ENCODE measurements at regions of chr3 and their contacts with region 1.

Region 1: DNA sequence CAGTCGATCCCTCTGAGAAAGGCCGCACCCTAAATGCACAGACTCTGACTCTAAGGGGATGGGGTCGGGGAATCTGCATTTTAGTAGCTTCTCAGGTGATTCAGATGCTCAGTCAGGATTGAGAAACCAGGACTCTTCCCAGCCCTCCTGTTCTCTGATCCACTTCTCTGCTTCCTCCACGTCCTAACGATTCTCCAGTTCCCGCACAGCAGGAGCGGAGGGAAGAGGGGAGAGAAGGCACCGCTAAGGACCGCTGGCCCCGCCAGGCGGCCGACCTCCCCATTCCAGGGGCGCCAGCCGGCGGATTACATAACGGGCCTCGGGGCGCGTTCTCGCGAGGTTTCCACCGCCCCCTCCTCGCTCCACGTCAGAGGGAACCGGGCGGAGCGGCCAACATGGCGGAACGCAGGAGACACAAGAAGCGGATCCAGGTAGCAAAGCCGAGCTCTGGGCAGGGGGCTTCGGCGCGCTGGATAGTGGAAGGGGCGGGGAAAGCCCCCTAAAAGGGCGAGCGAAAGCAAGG is at the start of gene SEC62:
- DNase-seq: peak; percentile 90 to 97 (median 94)
- H3K4me3 ChIP-seq: peak within 1 kb of the TSS; percentile 80
- H3K4me3 Mint-ChIP-seq: peak within 1 kb of the TSS; percentile 86 to 99 (median 96)
- H3K27ac ChIP-seq: peak within 1 kb of the TSS; percentile 89
- H3K27ac Mint-ChIP-seq: peak within 1 kb of the TSS; percentile 97 to 100 (median 99)
- H3K4me1 ChIP-seq: peaks cover 48% of the 10 kb centered on the region
- H3K4me1 Mint-ChIP-seq: peaks cover 56 to 77% (median 63%) of the 10 kb centered on the region in 3 donors
- H3K27me3 ChIP-seq: no peaks in the 10 kb centered on the region
- H3K27me3 Mint-ChIP-seq: no peaks in the 10 kb centered on the region
- total RNA-seq, gene SEC62: 66.7 to 68.3 TPM

Region 2: DNA sequence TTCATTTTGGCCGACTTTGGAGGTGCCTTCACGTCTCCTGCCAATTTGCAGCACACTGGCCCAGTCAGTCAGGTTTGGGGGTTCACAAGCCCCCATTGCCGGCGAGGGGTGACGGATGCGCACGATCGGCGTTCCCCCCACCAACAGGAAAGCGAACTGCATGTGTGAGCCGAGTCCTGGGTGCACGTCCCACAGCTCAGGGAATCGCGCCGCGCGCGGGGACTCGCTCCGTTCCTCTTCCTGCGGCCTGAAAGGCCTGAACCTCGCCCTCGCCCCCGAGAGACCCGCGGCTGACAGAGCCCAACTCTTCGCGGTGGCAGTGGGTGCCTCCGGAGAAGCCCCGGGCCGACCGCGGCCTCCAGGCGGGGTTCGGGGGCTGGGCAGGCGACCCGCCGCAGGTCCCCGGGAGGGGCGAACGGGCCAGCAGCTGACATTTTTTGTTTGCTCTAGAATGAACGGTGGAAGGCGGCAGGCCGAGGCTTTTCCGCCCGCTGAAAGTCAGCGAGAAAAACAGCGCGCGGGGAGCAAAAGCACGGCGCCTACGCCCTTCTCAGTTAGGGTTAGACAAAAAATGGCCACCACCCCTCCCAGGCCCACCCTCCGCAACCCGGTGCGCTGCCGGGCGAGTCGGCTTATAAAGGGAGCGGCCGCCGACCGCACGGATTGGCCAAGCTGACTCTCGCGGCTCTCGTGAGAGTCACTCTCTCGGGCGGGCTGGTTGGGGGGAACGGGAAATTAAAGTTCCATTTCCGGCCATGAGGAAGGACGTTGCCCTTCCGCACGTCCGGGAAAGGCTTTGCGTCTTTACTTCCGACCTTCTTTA is 201.8 kb before region 1 on chr3 and contains the start of gene TERC:
- CTCF ChIA-PET with region 1: interaction called, 14 read pairs
- POLR2A ChIA-PET with region 1: interaction called, 15 read pairs
- DNase-seq: peak; percentile 86 to 97 (median 95)
- H3K4me3 ChIP-seq: peak within 1 kb of the TSS; percentile 96
- H3K4me3 Mint-ChIP-seq: peak within 1 kb of the TSS; percentile 89 to 99 (median 98)
- H3K27ac ChIP-seq: peak within 1 kb of the TSS; percentile 92
- H3K27ac Mint-ChIP-seq: peak within 1 kb of the TSS; percentile 89 to 99 (median 98)
- H3K4me1 ChIP-seq: peaks cover 13% of the 10 kb centered on the region
- H3K4me1 Mint-ChIP-seq: peaks cover 27 to 38% (median 32%) of the 10 kb centered on the region in 3 donors
- H3K27me3 ChIP-seq: no peaks in the 10 kb centered on the region
- H3K27me3 Mint-ChIP-seq: no peaks in the 10 kb centered on the region
- total RNA-seq, gene TERC: 13.7 to 15.5 TPM

Region 3: GRCh38 chr3:169772897-169773828 is 193.3 kb before region 1 on chr3 and contains the start of gene MYNN:
- CTCF ChIA-PET with region 1: interaction called, 10 read pairs
- POLR2A ChIA-PET with region 1: interaction called, 23 read pairs
- DNase-seq: peak; percentile 85 to 95 (median 92)
- H3K4me3 ChIP-seq: peak within 1 kb of the TSS; percentile 100
- H3K4me3 Mint-ChIP-seq: peak within 1 kb of the TSS; percentile 94 to 100 (median 99)
- H3K27ac ChIP-seq: peak within 1 kb of the TSS; percentile 100
- H3K27ac Mint-ChIP-seq: peak within 1 kb of the TSS; percentile 97 to 100 (median 100)
- H3K4me1 ChIP-seq: peaks cover 25% of the 10 kb centered on the region
- H3K4me1 Mint-ChIP-seq: peaks cover 52 to 73% (median 72%) of the 10 kb centered on the region in 3 donors
- H3K27me3 ChIP-seq: no peaks in the 10 kb centered on the region
- H3K27me3 Mint-ChIP-seq: peaks cover 0 to 13% of the 10 kb centered on the region in 2 donors
- total RNA-seq, gene MYNN: 18.3 to 19.2 TPM

Region 4: GRCh38 chr3:170033489-170033888 is 67.0 kb after region 1 on chr3:
- CTCF ChIA-PET with region 1: interaction called, 7 read pairs
- POLR2A ChIA-PET with region 1: interaction called, 10 read pairs
- DNase-seq: peak; percentile 10 to 82 (median 66)
- H3K4me3 ChIP-seq: peak overlapping the region; percentile 40
- H3K4me3 Mint-ChIP-seq: peak overlapping the region; percentile 49 to 76 (median 59)
- H3K27ac ChIP-seq: no peak overlapping the region
- H3K27ac Mint-ChIP-seq: peak overlapping the region in 7 of 8 donors; percentile 58 to 87 (median 75)
- H3K4me1 ChIP-seq: peaks cover 33% of the 10 kb centered on the region
- H3K4me1 Mint-ChIP-seq: peaks cover 27 to 44% (median 32%) of the 10 kb centered on the region in 3 donors
- H3K27me3 ChIP-seq: no peaks in the 10 kb centered on the region
- H3K27me3 Mint-ChIP-seq: peaks cover 0 to 3% of the 10 kb centered on the region in 2 donors

Region 5: DNA sequence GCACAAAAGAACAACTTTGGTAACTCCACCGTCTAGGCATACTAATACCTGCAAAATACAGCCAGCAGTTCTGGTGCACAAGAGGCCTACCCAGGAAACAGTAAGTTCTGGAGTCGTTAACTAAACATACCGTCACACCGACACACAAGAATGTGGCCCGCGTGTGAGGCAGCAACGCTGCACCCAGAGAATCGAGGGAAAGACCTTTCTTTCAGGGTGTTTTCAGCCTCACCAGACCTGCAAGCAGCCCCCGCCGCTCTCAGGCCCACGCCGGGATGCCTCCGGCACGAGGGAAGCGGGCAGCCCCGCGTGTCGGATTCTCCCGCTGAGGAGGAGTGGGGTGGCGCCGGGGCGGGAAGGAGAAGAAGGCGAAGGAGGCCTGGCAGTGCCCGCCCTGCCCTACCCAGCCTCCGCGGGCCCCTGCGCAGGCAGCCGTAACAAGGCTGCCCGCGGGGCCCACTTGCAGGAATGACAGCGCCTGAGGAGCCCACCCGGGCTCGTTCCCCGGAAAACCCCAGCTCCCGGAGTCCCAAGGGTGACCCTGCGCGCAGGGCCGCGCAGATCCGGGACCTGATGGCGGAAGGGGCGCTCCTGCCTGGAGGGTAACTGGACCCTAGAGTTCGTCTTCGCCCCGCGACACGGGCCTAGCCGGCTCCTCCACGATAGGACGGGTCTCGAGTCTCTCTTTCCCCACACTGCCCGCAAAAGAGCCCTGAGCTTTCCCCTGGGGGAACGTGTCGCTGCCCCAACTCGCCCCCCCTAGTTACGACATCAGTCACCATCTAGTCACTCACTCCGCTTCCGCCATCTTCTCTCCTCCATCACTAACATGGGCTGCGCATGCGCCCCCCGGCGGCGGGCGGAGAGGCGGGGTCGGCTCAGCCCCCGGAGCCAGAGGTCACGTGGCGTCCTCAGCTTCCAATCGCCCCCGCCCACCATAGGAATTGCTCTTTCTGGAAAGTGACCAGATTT is 214.7 kb after region 1 on chr3 and contains the start of gene PHC3:
- CTCF ChIA-PET with region 1: no interaction called
- POLR2A ChIA-PET with region 1: interaction called, 16 read pairs
- DNase-seq: peak; percentile 85 to 95 (median 92)
- H3K4me3 ChIP-seq: peak within 1 kb of the TSS; percentile 67
- H3K4me3 Mint-ChIP-seq: peak within 1 kb of the TSS; percentile 88 to 100 (median 100)
- H3K27ac ChIP-seq: peak within 1 kb of the TSS; percentile 99
- H3K27ac Mint-ChIP-seq: peak within 1 kb of the TSS; percentile 99 to 100 (median 100)
- H3K4me1 ChIP-seq: peaks cover 29% of the 10 kb centered on the region
- H3K4me1 Mint-ChIP-seq: peaks cover 32 to 43% (median 38%) of the 10 kb centered on the region in 3 donors
- H3K27me3 ChIP-seq: no peaks in the 10 kb centered on the region
- H3K27me3 Mint-ChIP-seq: no peaks in the 10 kb centered on the region
- total RNA-seq, gene PHC3: 55.5 to 58.9 TPM